Activated CD4-positive, alpha-beta T cell treated with anti-CD3 and anti-CD28 coated beads for 36 hours (primary cell): ENCODE measurements at regions of chr10 and their contacts with region 1.

Region 1: DNA sequence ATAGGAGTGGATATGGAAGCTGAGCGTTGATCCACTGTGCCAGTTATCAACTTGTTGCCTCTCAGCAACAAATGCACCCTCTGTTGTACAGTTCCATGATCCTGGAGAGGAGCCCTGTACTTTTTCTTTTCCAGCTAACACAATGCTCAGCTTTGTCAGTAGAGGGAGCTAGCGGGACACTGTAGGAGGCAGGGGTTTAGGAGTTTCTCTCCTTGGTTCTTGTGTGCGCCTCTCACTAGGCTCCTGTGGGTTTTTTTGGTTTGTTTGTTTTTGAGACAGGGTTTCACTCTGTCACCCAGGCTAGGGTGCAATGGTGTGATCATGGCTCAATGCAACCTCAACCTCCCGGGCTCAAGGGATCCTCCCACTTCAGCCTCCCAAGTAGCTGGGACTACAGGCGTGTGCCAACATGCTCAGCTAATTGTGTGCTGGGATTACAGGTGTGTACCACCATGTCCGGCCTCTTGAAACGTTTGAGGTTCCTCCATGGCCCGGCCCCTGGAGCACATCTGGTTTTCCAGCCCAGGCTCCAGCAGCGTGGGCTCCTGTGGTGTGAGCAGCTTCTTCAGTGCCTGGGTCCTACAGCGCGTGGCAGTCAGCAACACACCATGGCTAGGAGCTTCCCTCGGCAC is 12.0 kb upstream of the MARVELD1 start:
- DNase-seq: peak; percentile 67
- ATAC-seq: peak; percentile 99
- H3K4me3 Mint-ChIP-seq: no peak overlapping the region
- H3K27ac Mint-ChIP-seq: no peak overlapping the region
- H3K4me1 Mint-ChIP-seq: no peaks in the 10 kb centered on the region
- H3K27me3 Mint-ChIP-seq: peaks cover 6% of the 10 kb centered on the region

Region 2: DNA sequence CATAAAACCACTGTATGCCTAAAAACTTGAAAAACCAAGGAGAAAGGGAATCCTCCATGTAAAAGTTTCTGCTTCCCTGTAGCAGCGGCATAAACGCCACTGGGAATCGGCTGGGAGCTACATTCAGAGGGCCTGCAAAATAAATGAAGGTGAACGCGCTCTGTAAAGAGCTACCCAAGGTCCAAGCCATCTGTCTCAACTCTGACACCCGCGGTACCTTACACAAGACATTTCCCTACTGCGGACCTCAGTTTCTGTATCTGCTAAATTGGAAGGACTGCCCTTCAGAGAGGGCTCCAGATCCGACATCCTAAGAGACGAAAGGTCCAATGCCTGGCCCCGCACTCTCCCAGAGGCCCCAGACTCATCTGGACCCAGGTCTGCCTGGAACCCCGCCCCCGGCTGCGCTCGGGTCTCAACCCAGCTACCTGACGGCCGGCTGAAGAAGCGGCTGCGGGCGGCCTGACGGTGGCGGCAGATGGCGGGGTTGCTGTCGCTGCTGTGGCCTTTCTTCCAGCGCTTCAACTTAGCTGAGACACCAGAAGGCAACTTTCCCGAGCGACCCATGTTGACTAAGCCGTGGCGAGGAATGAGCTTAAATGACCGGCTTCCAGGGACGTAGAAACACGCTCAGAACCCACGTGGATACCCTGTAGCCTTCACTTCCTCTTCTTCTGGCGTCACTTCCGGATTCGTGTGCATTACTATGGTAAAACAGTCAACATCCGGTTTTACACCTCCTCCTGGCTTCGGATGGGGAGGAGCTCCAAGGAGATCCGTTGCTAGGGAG is 300.7 kb before region 1 on chr10 and contains the start of gene RRP12:
- CTCF ChIA-PET with region 1: no interaction called
- POLR2A ChIA-PET with region 1: no interaction called
- intact Hi-C with region 1: no loop called
- DNase-seq: peak; percentile 89
- ATAC-seq: peak; percentile 99
- H3K4me3 Mint-ChIP-seq: peak within 1 kb of the TSS; percentile 96
- H3K27ac Mint-ChIP-seq: peak within 1 kb of the TSS; percentile 85
- H3K4me1 Mint-ChIP-seq: peaks cover 7% of the 10 kb centered on the region
- H3K27me3 Mint-ChIP-seq: no peaks in the 10 kb centered on the region
- total RNA-seq, gene RRP12: 45.9 to 49.4 TPM

Region 3: DNA sequence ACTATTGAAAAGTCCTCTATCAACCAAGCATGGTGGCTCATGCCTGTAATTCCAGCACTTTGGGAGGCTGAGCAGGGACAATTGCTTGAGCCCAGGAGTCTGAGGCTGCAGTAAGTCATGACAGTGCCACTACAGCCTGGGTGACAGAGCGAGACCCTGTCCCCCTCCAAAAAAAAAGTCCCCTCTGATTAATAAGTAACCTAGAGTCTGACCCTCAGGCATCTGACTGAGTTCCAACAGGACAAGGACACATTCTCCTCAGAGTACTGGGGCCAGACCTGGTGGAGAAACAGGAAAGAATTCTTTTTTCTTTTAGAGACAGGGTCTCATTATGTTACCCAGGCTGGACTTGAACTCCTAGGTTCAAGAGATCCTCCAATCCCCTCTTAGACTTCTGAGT is 78.3 kb before region 1 on chr10:
- CTCF ChIA-PET with region 1: no interaction called
- POLR2A ChIA-PET with region 1: no interaction called
- intact Hi-C with region 1: no loop called
- DNase-seq: no peak
- ATAC-seq: no peak
- H3K4me3 Mint-ChIP-seq: no peak overlapping the region
- H3K27ac Mint-ChIP-seq: no peak overlapping the region
- H3K4me1 Mint-ChIP-seq: no peaks in the 10 kb centered on the region
- H3K27me3 Mint-ChIP-seq: no peaks in the 10 kb centered on the region

Region 4: DNA sequence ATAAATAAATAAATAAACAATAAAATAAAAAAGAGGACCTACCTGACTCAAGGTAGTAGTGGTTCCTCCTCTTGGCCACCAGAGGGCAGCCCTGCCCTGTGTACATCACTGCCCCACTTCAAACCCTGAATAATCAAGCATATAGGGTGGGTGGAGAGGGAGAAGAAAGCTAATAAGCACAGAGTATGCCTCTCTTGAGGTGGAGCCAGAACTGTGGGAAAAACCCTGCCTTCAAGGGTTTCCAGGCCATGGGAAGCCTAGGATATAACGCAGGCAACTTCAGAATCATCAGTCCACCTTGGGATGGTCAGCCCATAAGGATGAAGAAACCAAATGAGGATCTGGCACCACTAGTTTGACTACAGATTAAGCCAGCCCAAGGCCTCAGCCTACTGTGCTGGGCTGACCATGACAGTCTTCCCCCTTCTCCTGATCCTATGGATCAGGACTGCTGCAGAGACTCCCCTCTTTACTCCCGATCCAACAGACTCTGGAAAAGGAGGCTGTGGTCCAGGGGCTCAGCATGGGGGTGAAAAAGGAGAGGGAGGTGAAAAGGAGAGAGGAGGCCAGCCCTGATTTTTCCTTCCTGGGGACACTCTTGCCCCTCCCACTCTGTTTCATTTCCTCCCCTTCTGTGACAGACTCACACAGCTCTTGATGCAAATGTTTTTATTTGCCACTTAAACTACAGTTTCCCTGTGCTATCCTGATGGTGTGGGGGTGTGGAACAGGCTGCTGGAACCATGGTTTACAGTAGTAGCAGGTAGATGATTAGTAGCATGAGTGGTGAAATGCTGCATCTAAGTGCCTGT is 24.6 kb before region 1 on chr10:
- CTCF ChIA-PET with region 1: interaction called, 18 read pairs
- POLR2A ChIA-PET with region 1: no interaction called
- intact Hi-C with region 1: no loop called
- DNase-seq: peak; percentile 64
- ATAC-seq: peak; percentile 84
- H3K4me3 Mint-ChIP-seq: no peak overlapping the region
- H3K27ac Mint-ChIP-seq: no peak overlapping the region
- H3K4me1 Mint-ChIP-seq: peaks cover 5% of the 10 kb centered on the region
- H3K27me3 Mint-ChIP-seq: no peaks in the 10 kb centered on the region

Region 5: GRCh38 chr10:97714048-97714371 is 12.5 kb after region 1 on chr10:
- CTCF ChIA-PET with region 1: interaction called, 24 read pairs
- POLR2A ChIA-PET with region 1: no interaction called
- intact Hi-C with region 1: no loop called
- DNase-seq: peak; percentile 74
- ATAC-seq: peak; percentile 85
- H3K4me3 Mint-ChIP-seq: peak overlapping the region; percentile 79
- H3K27ac Mint-ChIP-seq: peak overlapping the region; percentile 88
- H3K4me1 Mint-ChIP-seq: peaks cover 11% of the 10 kb centered on the region
- H3K27me3 Mint-ChIP-seq: peaks cover 19% of the 10 kb centered on the region

Region 6: GRCh38 chr10:97843281-97843671 is 141.7 kb after region 1 on chr10:
- CTCF ChIA-PET with region 1: no interaction called
- POLR2A ChIA-PET with region 1: no interaction called
- intact Hi-C with region 1: no loop called
- DNase-seq: no peak
- ATAC-seq: no peak
- H3K4me3 Mint-ChIP-seq: no peak overlapping the region
- H3K27ac Mint-ChIP-seq: no peak overlapping the region
- H3K4me1 Mint-ChIP-seq: peaks cover 16% of the 10 kb centered on the region
- H3K27me3 Mint-ChIP-seq: no peaks in the 10 kb centered on the region